ENCODE measurements at regions of chr11 and their contacts with region 1.

Region 1: GRCh38 chr11:35138943-35139721 is at the start of gene CD44:
- DNase-seq: peak; percentile 78
- H3K4me3 Mint-ChIP-seq: peak within 1 kb of the TSS; percentile 98
- H3K27ac Mint-ChIP-seq: peak within 1 kb of the TSS; percentile 92
- H3K4me1 Mint-ChIP-seq: peaks cover 36% of the 10 kb centered on the region
- H3K27me3 Mint-ChIP-seq: no peaks in the 10 kb centered on the region
- CTCF ChIP-seq: no peak
- total RNA-seq, gene CD44: 323 and 446 TPM in 2 replicates

Region 2: DNA sequence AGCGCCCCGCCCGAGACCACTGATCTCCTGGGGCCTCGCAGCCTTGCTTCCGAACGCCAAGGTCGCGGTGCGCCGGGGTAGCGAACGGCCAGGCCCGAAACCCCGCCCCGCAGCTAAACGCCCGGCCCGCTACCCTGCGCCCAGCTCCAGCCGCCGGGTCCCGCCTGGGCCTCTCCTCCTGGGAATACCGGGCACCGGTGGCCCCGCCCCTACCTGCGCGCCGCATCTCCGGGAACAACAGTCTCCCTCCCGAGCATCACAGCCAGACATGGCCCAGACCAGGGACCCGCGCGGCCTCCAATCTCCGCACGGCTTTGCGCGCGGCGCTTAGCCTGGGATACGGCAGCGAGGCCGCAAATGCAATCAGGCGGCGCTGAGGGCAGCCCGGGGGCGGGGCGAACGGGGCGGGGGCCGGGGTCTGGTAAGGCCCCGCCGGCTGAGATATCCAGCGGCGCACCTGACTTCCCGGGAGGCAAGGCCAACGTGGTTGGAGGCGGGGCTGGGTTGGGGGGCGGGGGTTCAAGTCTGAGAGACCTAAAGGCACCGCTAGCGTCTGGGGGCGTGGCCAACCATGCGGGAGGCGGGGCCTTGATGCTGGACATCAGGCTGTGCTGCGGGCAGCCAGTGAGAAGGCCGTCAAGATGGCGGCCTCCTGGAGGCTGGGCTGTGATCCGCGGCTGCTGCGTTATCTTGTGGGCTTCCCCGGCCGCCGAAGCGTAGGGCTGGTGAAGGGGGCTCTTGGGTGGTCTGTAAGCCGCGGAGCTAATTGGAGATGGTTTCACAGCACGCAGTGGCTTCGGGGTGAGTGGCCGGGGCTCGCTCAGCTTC is 222.9 kb before region 1 on chr11 and contains the starts of genes APIP and PDHX:
- CTCF ChIA-PET with region 1: no interaction called
- POLR2A ChIA-PET with region 1: interaction called, 20 read pairs
- intact Hi-C with region 1: no loop called
- DNase-seq: peak; percentile 99
- H3K4me3 Mint-ChIP-seq: peak within 1 kb of the TSS; percentile 99
- H3K27ac Mint-ChIP-seq: peak within 1 kb of the TSS; percentile 99
- H3K4me1 Mint-ChIP-seq: peaks cover 19% of the 10 kb centered on the region
- H3K27me3 Mint-ChIP-seq: no peaks in the 10 kb centered on the region
- CTCF ChIP-seq: no peak
- total RNA-seq, gene APIP: 32.4 and 36.9 TPM in 2 replicates
- total RNA-seq, gene PDHX: 35.5 and 35.9 TPM in 2 replicates

Region 3: DNA sequence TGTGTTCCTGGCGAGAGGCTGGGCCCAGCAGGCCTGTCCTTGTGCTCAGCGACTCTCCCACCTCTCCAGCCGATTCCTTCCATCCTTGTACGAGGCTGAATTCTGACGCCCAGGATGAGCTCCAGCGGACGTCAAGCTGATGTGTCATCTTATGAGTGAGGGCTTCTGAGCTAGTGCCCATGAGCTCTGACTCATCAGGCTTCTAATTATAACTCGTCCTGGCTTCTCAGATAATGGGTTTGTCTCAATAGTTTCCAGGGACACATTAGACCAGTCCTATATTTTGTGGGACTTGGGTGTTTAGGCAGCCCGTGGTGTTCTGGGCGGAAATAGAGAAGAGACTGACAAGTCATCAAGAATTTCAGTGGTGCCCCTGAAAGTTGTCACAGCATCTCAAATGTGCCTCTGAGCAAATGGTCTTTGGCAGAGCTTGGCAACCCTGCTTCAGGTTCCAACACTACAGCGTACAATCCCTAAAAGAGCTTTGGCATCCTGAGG is 108.4 kb before region 1 on chr11:
- CTCF ChIA-PET with region 1: interaction called, 3 read pairs
- POLR2A ChIA-PET with region 1: interaction called, 35 read pairs
- intact Hi-C with region 1: no loop called
- DNase-seq: peak; percentile 97
- H3K4me3 Mint-ChIP-seq: no peak overlapping the region
- H3K27ac Mint-ChIP-seq: peak overlapping the region; percentile 77
- H3K4me1 Mint-ChIP-seq: peaks cover 30% of the 10 kb centered on the region
- H3K27me3 Mint-ChIP-seq: no peaks in the 10 kb centered on the region
- CTCF ChIP-seq: no peak

Region 4: DNA sequence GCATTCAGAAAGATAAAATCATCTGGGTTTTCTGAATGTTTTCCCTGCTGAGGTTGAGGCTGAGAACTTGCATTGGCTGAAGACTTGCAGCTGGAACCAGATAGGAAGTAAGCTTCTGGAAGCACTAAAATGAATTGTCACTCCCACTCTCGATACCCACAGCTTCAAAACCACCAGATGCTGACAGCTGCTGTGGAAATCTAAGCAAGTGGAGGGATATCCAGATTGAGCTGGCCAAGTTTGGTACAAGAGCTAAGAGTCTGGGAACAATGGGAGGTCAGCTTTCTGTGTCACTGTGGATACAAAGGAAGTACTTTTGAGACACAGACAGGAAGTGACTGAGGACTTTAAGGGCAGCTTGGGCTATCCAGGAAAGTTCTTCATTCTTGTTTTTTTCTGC is 51.5 kb before region 1 on chr11:
- CTCF ChIA-PET with region 1: interaction called, 3 read pairs
- POLR2A ChIA-PET with region 1: interaction called, 16 read pairs
- intact Hi-C with region 1: loop called (anchors 2 kb)
- DNase-seq: no peak
- H3K4me3 Mint-ChIP-seq: no peak overlapping the region
- H3K27ac Mint-ChIP-seq: no peak overlapping the region
- H3K4me1 Mint-ChIP-seq: peaks cover 40% of the 10 kb centered on the region
- H3K27me3 Mint-ChIP-seq: no peaks in the 10 kb centered on the region
- CTCF ChIP-seq: no peak

Region 5: DNA sequence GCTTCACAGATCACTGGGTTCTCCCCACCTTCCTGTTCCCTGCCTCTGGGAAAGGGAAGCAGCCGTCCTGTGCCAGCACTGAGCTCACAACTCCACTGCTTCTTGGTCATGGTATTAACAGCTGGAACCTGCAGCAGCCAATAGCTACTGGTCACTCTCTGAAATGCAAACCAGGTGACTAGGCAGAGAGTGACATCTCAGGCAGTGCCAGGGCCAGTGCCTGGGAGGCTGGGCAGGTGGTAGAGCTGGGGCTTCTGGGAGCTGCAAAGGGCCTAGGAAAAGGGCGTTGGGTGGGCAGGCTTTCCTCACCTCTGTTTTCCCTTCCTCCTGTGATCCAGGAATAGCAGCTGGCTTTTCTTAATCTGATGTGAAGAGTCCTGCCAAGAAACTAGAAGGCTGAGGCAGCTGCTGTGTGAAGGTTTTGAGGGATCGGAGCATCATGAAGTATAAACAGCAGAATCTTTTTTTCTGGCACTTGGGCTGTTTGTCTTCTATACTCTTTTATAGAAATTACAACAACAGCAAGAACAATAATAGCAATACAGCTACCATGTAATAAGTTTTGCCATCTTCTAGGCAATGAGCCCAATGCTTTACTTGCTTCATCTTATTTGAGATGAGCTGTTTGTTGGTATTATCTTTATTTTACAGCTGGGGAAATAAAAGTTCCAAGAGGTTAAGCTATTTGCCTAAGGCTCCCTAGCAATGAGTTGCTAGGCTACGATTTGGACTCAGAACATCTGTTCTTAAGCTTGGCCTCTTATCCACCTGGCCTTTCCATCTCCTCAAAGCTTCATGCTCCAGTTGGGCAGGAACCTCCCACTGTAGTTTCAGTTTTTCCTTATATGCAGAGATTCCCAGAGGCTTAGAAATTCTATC is 22.1 kb before region 1 on chr11:
- CTCF ChIA-PET with region 1: interaction called, 3 read pairs
- POLR2A ChIA-PET with region 1: interaction called, 43 read pairs
- intact Hi-C with region 1: no loop called
- DNase-seq: peak; percentile 9
- H3K4me3 Mint-ChIP-seq: no peak overlapping the region
- H3K27ac Mint-ChIP-seq: peak overlapping the region; percentile 31
- H3K4me1 Mint-ChIP-seq: peaks cover 23% of the 10 kb centered on the region
- H3K27me3 Mint-ChIP-seq: no peaks in the 10 kb centered on the region
- CTCF ChIP-seq: no peak

Region 6: DNA sequence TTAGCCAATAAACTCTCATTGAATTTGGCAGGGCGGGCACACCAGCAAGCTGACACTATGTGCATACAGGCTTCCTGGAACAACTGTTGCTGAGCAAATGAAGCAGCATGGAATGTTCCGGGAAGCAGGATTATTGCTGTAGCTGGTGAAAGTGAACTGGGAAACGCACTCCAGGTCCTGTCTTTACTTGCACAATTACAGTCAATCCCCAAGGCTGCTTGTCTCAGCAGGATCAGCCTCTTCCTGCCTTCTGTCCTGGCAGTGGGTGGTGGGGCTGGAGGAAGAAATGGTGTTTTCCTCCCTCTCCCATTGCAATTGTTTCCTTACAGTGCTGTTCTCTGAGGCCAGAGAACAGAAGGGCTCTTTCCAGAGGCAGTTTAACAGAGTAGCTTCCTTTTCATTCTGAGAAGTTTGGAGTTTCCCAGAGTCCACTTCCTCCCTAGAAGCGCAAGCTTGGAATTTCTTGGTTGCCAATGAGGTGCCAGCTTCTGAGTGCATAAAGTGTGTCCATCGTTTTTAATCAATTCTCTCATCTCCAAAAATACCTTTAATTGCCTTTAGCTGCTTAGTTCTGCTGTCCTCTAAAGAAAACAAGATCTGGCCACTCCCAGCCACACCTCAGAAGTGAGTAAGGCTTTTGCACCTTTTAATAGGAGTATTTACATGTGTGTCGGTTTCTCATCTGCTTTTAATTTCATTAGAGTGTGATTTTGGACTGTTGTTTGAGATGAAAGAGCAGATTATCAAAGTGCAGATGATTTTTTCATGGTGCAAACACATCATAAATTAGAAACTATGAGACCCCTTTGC is 19.8 kb after region 1 on chr11:
- CTCF ChIA-PET with region 1: interaction called, 9 read pairs
- POLR2A ChIA-PET with region 1: interaction called, 233 read pairs
- intact Hi-C with region 1: no loop called
- DNase-seq: peak; percentile 90
- H3K4me3 Mint-ChIP-seq: peak overlapping the region; percentile 34
- H3K27ac Mint-ChIP-seq: peak overlapping the region; percentile 79
- H3K4me1 Mint-ChIP-seq: peaks cover 55% of the 10 kb centered on the region
- H3K27me3 Mint-ChIP-seq: no peaks in the 10 kb centered on the region
- CTCF ChIP-seq: no peak

Region 7: GRCh38 chr11:35174666-35175065 is 35.5 kb after region 1 on chr11:
- CTCF ChIA-PET with region 1: interaction called, 3 read pairs
- POLR2A ChIA-PET with region 1: interaction called, 75 read pairs
- intact Hi-C with region 1: no loop called
- DNase-seq: peak; percentile 30
- H3K4me3 Mint-ChIP-seq: no peak overlapping the region
- H3K27ac Mint-ChIP-seq: peak overlapping the region; percentile 28
- H3K4me1 Mint-ChIP-seq: peaks cover 32% of the 10 kb centered on the region
- H3K27me3 Mint-ChIP-seq: no peaks in the 10 kb centered on the region
- CTCF ChIP-seq: no peak

Region 8: GRCh38 chr11:35321532-35322359 is 182.6 kb after region 1 on chr11:
- CTCF ChIA-PET with region 1: no interaction called
- POLR2A ChIA-PET with region 1: no interaction called
- intact Hi-C with region 1: no loop called
- DNase-seq: no peak
- H3K4me3 Mint-ChIP-seq: no peak overlapping the region
- H3K27ac Mint-ChIP-seq: no peak overlapping the region
- H3K4me1 Mint-ChIP-seq: peaks cover 16% of the 10 kb centered on the region
- H3K27me3 Mint-ChIP-seq: no peaks in the 10 kb centered on the region
- CTCF ChIP-seq: no peak

Measured in MCF 10A (cell line).